ENCODE measurements at regions of chr5 and their contacts with region 1.

Region 1: DNA sequence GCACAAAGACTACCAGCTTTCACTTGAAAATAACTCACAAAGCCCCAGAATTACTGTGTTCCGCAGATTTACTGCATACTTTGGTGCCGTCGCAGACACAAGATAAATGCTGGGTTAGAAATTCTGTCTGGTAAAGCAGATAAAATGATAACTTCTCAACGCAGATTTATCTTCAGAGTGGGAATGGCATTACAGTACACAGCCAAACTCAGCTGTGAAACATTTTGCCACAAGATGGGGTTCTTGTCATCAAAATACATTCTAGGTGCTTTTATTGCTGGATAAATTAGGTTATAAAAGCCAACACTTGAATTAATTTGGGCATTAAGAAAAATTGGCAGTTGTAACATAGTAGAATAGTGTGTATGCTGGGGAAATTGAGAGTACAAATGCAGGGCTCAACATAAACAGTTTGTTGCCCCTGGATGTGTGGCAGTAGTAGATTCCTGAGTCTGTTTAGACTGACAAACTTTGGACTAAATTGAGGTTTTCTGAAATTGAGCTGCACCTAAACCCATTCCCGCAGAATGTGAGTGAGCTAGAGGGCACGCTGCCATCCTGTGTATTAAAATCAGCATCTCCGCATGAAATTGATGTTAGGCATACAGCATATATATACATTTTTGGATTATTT is 61.1 kb downstream of the LMNB1 start:
- DNase-seq: no peak
- ATAC-seq: peak; percentile 74

Region 2: DNA sequence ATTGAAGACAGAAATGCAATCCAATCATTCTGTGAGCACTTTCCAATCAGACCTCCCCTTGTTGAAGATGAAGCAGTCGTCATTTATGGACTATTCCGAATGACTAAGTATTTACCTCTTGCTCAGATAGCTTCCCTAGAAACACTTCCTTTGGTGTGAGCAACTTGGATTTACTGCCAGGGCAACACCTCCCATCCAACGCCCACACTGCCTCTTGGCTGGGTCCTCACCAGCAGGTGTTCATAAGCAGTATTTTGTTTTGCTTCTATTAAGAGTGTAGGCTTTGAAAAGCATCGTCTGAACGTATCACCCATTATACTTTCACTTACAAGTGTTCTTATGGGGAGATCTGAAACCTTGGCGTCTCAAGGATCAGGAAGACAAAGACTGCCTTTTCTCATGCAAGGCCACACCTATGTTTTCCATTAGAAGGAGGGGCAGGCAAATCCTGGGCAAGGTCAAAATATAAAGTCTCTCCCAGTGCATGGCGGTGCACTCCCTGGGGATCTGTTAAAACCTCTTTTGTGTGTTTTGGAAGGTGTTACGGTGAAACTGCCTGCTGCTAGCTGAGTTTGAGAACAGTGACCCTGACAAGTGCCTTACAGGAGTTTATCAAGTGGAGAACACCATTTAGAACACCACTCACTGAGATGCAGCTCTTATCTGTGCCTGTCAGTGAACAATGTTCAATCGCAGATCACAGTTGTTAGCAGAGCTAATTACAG is 202.9 kb after region 1 on chr5:
- intact Hi-C with region 1: loop called (anchors 5 kb)
- DNase-seq: no peak
- ATAC-seq: peak; percentile 62

Region 3: DNA sequence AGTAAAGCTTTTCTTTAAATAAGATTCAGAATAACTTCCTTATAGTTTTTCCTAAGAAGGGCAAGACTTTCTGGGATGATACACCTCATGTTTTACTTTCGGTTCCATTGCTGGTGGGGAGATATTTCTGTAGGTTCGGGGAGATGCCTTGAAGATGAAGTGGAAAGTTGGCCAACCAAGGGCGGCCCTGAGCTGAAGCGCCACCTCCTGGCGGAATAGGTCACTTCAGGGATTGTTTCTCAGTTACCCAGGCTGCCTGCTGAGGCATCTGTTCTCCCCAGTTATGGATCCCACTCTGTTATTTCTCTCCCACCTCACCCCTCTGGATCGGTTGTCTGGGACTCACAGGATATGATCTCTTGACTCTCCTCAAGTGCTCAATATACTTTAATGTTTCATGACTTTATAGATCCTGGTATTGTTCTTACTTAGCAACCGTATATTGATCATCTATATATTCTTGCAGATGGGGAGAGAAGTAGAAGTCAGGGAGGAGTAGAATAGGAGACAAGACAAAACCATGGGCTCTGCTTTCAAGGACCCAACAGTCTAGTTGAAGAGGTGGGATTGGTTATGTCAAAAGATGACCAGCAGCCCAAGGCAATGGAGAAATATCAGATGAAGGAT is 475.9 kb after region 1 on chr5:
- intact Hi-C with region 1: loop called (anchors 10 kb)
- DNase-seq: peak; percentile 64
- ATAC-seq: peak; percentile 74

Measured in Right ventricle myocardium superior (tissue), 1 donor.